GM23248 (cell line): ENCODE measurements at regions of chr13 and their contacts with region 1.

Region 1: DNA sequence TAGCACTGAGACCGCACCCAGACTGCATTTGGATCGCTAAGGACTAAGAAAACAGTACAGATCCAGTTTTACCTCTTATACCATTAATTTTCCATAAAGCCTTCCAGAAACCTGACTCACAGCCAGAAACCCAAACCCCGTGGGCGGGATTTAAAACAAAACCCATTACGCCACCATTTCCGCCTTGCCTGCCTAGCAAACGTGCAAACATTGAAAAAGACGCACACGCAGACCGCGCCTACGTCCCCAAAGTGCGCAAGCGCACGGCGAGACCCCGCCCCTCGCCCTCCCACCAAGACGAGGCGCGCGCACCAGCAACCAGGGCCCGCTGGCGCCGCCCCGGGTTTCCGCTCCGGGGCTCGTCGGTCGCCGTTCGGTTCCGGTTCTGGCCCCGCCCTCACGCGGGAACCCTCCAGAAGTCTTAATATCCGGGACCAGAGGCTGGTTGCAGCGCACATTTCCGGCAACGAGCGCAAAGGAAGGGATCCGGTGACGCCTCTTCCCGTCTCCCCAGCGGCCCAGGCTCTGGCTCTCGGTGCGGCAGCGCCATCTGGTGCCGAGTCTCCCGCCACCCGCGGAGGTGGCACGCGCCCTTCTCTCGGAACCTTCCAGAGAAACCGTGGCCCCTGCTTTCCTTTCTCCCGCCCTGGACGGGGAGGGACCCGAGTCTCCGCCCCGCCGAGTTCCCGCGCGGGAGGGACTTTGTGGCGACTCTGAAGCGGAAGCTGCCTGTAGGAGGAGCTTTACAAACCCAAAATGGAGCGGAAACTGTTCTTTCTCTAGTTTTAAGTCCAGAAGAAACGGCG is 256.9 kb upstream of the STARD13 start:
- DNase-seq: peak; percentile 100
- H3K4me3 ChIP-seq: peak overlapping the region; percentile 80
- H3K27ac ChIP-seq: peak overlapping the region; percentile 96
- H3K4me1 ChIP-seq: peaks cover 31% of the 10 kb centered on the region
- H3K27me3 ChIP-seq: no peaks in the 10 kb centered on the region

Region 2: DNA sequence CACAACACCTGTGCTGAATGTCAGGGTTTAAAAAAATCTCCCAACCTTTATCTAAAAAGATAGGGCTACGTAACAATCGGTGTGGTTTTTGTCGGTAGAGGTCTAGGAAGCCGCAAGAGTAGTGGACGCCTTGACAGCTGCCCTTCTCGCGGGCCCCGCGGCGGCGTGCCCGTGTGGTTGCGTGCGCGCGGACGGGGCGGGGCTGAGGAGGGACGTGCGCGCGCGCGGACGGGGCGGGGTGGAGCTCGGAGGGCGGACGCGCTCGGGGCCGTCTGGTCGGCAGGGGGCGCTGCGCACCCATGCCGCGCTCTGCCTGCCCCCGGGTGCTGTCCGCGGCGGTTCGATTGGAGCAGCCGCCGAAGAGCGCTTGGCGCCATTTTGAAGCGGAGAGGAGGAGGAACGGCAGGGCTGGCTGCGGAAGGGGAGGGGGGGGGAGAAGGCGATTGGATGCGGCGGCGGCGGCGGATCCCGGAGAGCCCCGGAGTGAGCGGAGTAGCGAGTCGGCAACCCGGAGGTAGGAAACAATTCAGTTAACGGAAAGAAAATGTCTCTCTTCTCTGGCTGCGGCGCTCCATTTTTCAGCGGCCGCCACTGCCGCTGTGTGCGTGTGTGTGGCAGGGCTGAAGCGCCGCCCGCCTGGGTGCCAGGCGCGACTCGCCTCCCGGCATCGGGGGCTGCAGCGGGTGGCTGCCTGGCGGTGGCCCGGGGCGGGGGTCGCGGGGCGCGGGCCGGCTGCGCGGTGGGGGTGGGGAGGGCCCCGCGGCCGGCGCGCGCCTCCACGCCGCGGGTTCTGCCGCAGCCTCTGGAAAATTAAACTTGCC is 956.2 kb before region 1 on chr13 and contains the start of gene PDS5B:
- in situ Hi-C with region 1: loop called (anchors 25 kb)
- DNase-seq: peak; percentile 98
- H3K4me3 ChIP-seq: peak within 1 kb of the TSS; percentile 97
- H3K27ac ChIP-seq: peak within 1 kb of the TSS; percentile 74
- H3K4me1 ChIP-seq: peaks cover 22% of the 10 kb centered on the region
- H3K27me3 ChIP-seq: no peaks in the 10 kb centered on the region
- total RNA-seq, gene PDS5B: 13.4 and 14.5 TPM in 2 replicates

Region 3: GRCh38 chr13:33710924-33711323 is 168.4 kb after region 1 on chr13:
- in situ Hi-C with region 1: loop called (anchors 10 kb)
- DNase-seq: no peak
- H3K4me3 ChIP-seq: no peak overlapping the region
- H3K27ac ChIP-seq: no peak overlapping the region
- H3K4me1 ChIP-seq: no peaks in the 10 kb centered on the region
- H3K27me3 ChIP-seq: no peaks in the 10 kb centered on the region